ENCODE measurements at regions of chr20 and their contacts with region 1.

Region 1: GRCh38 chr20:20887593-20888265 is 175.3 kb upstream of the RALGAPA2 start:
- DNase-seq: no peak
- ATAC-seq: no peak
- H3K4me3 ChIP-seq: no peak overlapping the region
- H3K27ac ChIP-seq: no peak overlapping the region
- H3K4me1 ChIP-seq: no peaks in the 10 kb centered on the region
- H3K27me3 ChIP-seq: peaks cover 0 to 34% (median 12%) of the 10 kb centered on the region in 3 donors
- CTCF ChIP-seq: no peak
- POLR2A ChIP-seq: no peak

Region 2: DNA sequence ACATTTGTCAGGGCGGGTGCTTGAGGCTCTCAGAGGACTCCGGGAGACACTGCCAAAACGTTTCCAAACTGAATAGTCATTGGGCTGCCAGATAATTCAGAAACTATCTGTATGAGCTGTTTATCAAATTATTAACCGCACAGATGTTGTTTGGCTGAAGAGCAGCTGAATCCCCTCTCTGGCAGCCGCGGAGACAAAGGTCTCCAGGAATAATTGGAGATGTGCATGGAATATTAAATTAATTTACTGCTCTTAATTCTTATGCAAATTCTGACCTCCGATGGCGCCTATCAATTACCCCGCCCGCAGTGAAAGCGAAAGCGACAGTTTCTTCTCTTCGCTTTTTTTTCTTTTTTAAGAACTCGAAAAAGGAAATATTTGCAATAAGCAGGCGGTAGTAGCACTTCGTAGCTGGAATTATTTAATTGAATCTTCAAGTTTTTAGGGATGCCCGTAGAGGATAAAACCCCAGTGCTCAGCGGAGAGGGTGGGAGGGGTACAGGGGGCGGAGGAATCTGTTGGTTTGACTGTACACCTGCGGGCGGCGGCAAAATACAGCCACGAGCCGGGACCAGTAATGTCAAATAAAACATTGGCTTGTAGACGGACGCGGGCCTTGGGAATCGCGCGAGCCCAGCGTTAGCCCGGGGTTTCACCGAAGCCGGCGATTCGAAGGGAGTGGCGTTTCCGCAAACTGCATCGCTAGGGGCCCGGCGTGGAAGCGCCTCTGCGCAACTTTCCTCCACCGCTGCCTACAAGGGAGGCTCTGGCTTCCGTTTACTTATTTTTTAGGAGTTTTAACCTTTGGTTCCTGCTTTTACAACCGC is 212.2 kb after region 1 on chr20:
- in situ Hi-C with region 1: no loop called
- intact Hi-C with region 1: loop called (anchors 10 kb)
- DNase-seq: no peak
- ATAC-seq: no peak
- H3K4me3 ChIP-seq: peak overlapping the region; percentile 43 to 59 (median 46)
- H3K27ac ChIP-seq: peak overlapping the region in 1 of 4 donors; percentile 55
- H3K4me1 ChIP-seq: peaks cover 16 to 42% of the 10 kb centered on the region in 2 donors
- H3K27me3 ChIP-seq: peaks cover 66 to 83% (median 79%) of the 10 kb centered on the region in 3 donors
- CTCF ChIP-seq: no peak
- POLR2A ChIP-seq: no peak